ENCODE measurements at regions of chr16 and their contacts with region 1.

Region 1: DNA sequence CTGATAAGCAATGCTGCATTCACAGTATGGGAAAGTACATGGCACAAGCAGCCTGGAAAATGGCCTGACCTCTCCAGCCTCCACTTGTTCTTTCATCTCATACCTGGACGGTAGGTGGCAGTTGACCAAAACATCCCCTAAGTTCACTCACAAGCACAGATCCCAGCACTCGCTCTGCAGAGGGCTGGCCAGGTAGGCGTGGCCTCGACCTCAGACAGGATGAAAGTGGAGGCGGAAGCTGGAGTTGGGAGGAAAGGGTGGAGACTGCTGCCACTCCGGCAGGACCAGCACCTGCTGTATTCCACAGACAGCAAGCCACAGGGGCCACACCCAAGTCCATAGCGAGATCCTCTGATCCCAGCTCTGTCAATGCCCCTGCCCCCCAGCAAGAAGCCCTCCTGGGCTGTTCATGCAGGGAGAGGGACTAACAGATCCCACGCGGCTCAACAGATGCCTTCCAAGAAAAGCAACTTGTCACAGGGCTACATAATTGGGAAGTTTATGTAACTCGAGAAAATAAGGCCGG is 31.3 kb downstream of the ZCCHC14 start:
- DNase-seq: peak; percentile 97
- H3K4me3 Mint-ChIP-seq: peak overlapping the region; percentile 34
- H3K27ac Mint-ChIP-seq: no peak overlapping the region
- H3K4me1 Mint-ChIP-seq: peaks cover 61% of the 10 kb centered on the region
- H3K27me3 Mint-ChIP-seq: no peaks in the 10 kb centered on the region
- CTCF ChIP-seq: peak; percentile 58

Region 2: DNA sequence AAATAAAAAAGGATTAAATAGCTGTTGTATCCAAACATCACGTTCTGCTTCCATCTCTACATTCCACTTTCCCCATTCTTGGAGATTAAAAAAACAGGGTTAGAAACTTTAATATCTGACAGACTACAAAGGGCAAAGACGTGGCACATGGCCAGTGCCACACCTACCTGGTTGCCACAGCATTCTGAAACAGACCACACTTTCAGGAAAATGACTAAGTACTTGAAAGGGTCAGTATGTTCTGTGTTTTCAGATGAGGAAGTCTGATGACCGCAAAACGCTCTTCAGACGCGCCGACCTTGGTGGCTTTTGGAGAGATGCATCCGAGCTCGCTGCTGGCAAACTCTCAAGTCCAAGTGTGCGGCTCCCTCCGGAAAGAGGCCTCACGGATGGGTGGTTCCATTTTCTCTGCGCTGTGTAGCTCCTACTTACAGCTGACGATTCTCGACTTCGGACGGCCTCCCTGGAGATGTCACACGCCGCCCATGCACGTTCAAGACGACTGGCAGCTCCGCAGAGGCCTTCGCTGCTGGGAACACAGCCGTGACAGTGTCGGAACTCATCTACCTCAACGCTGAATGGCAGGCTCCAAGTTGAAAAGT is 53.9 kb before region 1 on chr16:
- CTCF ChIA-PET with region 1: no interaction called
- intact Hi-C with region 1: loop called (anchors 5 kb)
- DNase-seq: peak; percentile 83
- H3K4me3 Mint-ChIP-seq: peak overlapping the region; percentile 47
- H3K27ac Mint-ChIP-seq: peak overlapping the region; percentile 73
- H3K4me1 Mint-ChIP-seq: peaks cover 18% of the 10 kb centered on the region
- H3K27me3 Mint-ChIP-seq: no peaks in the 10 kb centered on the region
- CTCF ChIP-seq: no peak

Region 3: GRCh38 chr16:87435372-87436224 is 25.9 kb before region 1 on chr16:
- CTCF ChIA-PET with region 1: no interaction called
- intact Hi-C with region 1: no loop called
- DNase-seq: no peak
- H3K4me3 Mint-ChIP-seq: no peak overlapping the region
- H3K27ac Mint-ChIP-seq: no peak overlapping the region
- H3K4me1 Mint-ChIP-seq: no peaks in the 10 kb centered on the region
- H3K27me3 Mint-ChIP-seq: no peaks in the 10 kb centered on the region
- CTCF ChIP-seq: no peak

Region 4: DNA sequence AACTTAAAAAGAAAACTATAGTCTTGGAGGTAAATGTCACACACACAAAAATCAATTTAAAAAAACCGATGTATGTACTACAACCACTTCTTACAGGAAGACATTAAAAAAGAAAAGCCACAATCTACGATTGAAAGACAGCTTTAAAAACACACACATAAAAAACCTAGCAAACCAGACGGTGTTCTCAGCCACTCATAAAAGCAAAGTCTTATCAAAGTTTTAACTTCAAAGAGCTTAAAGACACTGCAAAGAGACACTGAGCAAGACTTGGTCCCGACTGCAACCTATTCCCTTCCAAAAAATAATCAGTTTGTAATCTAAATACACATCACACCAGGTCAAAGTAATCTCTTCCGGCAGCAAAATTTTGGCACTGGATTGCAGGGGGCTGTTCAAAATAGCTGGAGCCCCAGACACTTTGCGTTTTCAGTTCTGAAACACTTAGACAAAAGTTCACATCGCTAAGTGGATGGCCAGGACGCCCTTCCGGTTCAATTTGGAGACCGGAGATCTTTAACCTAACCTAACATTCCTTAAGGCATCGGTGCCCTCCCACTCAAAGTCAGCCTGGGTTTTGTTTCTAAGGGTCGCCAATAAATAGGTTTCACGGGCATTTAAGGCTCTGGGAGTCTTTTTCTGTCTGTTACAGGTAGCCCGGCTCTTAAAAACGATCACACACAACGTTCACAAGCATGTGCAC is 28.7 kb after region 1 on chr16:
- CTCF ChIA-PET with region 1: interaction called, 6 read pairs
- intact Hi-C with region 1: loop called (anchors 1 kb)
- DNase-seq: no peak
- H3K4me3 Mint-ChIP-seq: peak overlapping the region; percentile 96
- H3K27ac Mint-ChIP-seq: peak overlapping the region; percentile 88
- H3K4me1 Mint-ChIP-seq: peaks cover 53% of the 10 kb centered on the region
- H3K27me3 Mint-ChIP-seq: no peaks in the 10 kb centered on the region
- CTCF ChIP-seq: no peak